ENCODE measurements at regions of chr20 and their contacts with region 1.

Region 1: GRCh38 chr20:2840138-2840966 is at the starts of genes PCED1A and VPS16:
- DNase-seq: peak; percentile 93
- H3K4me3 ChIP-seq: peak within 1 kb of the TSS; percentile 79 to 96 (median 85)
- H3K27ac ChIP-seq: peak within 1 kb of the TSS; percentile 86 to 95 (median 92)
- H3K4me1 ChIP-seq: peaks cover 0 to 24% (median 14%) of the 10 kb centered on the region in 4 donors
- H3K27me3 ChIP-seq: no peaks in the 10 kb centered on the region
- CTCF ChIP-seq: no peak
- EP300 ChIP-seq: no peak
- POLR2A ChIP-seq: peak; percentile 25 to 34
- total RNA-seq, gene PCED1A: 12.7 to 27.7 (median 21.5) TPM
- total RNA-seq, gene VPS16: 19.4 to 24.4 (median 21.0) TPM

Region 2: DNA sequence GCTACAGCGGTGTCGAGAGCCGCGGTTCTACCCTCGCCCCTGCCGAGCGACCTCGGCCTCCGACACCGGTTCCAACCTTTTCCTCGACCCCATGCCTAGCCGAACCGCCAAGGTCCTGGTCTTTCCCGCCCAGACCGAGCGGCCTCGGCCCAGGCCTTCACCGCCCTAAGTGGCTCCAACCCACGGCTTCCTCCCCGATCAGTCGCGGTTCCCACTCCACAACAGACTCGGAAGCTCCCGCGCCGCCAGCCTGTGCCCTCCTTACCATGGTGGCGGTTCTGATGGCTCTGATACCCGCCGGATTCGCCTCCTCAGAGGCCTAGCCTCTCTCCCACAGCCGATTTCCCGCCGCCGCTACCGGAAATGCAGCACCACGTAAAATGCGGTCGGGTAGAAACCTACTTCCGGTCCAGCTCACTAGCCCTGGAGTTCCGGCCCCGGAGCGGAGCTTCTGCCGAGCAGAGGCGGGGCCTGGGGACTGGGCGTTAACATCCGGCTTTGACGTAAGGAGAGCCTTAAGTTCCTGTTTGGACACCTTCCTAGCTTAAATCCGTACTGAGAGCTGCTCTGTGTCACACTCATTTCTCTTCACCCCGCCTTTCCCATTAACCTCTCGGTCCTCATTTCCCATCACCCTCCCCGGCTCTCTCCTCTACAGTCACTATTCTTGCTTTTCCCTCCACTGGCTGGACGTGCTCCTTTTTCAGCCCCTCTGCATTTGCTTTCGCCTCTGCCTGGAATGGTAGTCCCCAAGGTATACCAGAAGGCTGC is 369.7 kb before region 1 on chr20 and contains the start of gene SNRPB:
- intact Hi-C with region 1: loop called (anchors 5 kb)
- DNase-seq: peak; percentile 99
- H3K4me3 ChIP-seq: peak within 1 kb of the TSS; percentile 45 to 79 (median 69)
- H3K27ac ChIP-seq: peak within 1 kb of the TSS; percentile 85 to 95 (median 92)
- H3K4me1 ChIP-seq: peaks cover 0 to 32% (median 27%) of the 10 kb centered on the region in 4 donors
- H3K27me3 ChIP-seq: no peaks in the 10 kb centered on the region
- CTCF ChIP-seq: no peak
- EP300 ChIP-seq: peak in 1 of 4 donors; percentile 12
- POLR2A ChIP-seq: peak; percentile 62 to 83
- total RNA-seq, gene SNRPB: 80.0 to 165 (median 142) TPM

Region 3: GRCh38 chr20:2873010-2873746 is 32.8 kb after region 1 on chr20 and contains the start of gene PTPRA:
- intact Hi-C with region 1: loop called (anchors 2 kb)
- DNase-seq: peak; percentile 95
- H3K4me3 ChIP-seq: peak within 1 kb of the TSS; percentile 88 to 98 (median 94)
- H3K27ac ChIP-seq: peak within 1 kb of the TSS; percentile 78 to 91 (median 86)
- H3K4me1 ChIP-seq: peaks cover 0 to 44% (median 31%) of the 10 kb centered on the region in 4 donors
- H3K27me3 ChIP-seq: peaks cover 0 to 14% (median 0%) of the 10 kb centered on the region in 3 donors
- CTCF ChIP-seq: no peak
- EP300 ChIP-seq: no peak
- POLR2A ChIP-seq: peak; percentile 49
- total RNA-seq, gene PTPRA: 62.0 to 86.4 (median 73.6) TPM

Measured in sigmoid colon (tissue), 7 donors.